Breast epithelium (tissue), 4 donors: ENCODE measurements at regions of chr18 and their contacts with region 1.

Region 1: DNA sequence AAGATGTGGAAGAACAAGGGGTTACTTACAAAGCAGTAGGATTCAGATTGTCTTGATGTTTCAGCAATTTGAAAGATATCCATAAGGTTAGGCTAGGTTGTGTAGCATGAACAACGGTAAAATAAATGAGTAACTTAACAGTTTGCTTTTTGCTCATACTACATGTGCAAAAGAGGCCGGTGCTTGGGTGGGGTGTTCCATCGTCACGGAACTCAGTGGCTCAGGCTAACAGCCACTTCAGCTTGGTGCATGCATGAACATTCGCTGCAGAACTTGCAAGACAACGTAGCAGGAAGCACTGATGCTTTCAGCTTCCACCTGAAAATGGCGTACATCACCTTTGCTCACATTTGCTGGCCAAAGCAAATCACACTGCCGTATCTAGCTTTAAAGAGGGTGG is 407.3 kb upstream of the CDH20 start:
- DNase-seq: no peak
- H3K4me3 ChIP-seq: no peak overlapping the region
- H3K27ac ChIP-seq: no peak overlapping the region
- H3K4me1 ChIP-seq: no peaks in the 10 kb centered on the region
- H3K27me3 ChIP-seq: no peaks in the 10 kb centered on the region
- CTCF ChIP-seq: no peak
- POLR2A ChIP-seq: no peak

Region 2: GRCh38 chr18:59898609-59899297 is 1027.1 kb before region 1 on chr18:
- intact Hi-C with region 1: no loop called
- DNase-seq: no peak
- H3K4me3 ChIP-seq: peak overlapping the region; percentile 46 to 70 (median 68)
- H3K27ac ChIP-seq: peak overlapping the region; percentile 83 to 91
- H3K4me1 ChIP-seq: no peaks in the 10 kb centered on the region
- H3K27me3 ChIP-seq: no peaks in the 10 kb centered on the region
- CTCF ChIP-seq: no peak
- POLR2A ChIP-seq: no peak

Region 3: DNA sequence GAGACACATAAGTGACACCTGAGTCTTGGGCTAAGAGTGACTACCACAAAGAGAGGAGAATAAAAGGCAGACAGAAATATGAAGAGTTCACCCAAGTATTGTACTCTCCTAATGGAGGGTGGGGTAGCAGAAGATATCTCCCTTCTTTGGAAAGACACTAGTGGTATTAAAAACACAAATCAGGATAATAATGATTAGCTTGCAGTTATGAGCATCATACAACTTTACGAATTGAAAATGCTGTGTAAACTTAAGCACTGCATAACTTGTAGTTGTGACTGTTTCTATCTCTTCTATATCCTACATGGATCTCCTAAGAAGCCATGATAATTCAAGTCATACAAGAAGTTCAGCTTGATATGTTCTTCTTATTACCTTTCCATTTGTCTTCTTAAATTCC is 369.3 kb after region 1 on chr18:
- intact Hi-C with region 1: loop called (anchors 5 kb)
- DNase-seq: no peak
- H3K4me3 ChIP-seq: no peak overlapping the region
- H3K27ac ChIP-seq: no peak overlapping the region
- H3K4me1 ChIP-seq: no peaks in the 10 kb centered on the region
- H3K27me3 ChIP-seq: no peaks in the 10 kb centered on the region
- CTCF ChIP-seq: no peak
- POLR2A ChIP-seq: no peak